PC-3 (cell line): ENCODE measurements at regions of chr16 and their contacts with region 1.

Region 1: DNA sequence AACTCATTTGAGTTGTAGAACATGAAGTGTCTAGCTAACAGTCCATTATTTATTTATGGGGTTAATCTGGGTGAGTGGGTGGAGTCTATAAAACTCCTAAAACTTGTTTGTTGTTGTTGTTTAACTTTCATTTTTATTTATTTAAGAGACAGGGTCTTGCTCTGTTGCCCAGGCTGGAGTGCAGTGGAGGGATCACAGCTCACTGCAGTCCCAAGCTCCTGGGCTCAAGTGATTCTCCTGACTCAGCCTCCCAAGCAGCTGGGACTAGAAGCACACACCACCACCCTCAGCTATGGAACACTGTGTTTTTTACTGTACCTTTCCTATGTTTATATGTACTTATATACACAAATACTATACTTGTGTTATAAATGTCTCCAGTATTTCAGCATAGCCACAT is 77.8 kb upstream of the CLEC18B start:
- DNase-seq: no peak
- ATAC-seq: no peak
- H3K4me3 ChIP-seq: no peak overlapping the region
- H3K27ac ChIP-seq: no peak overlapping the region
- H3K4me1 ChIP-seq: no peaks in the 10 kb centered on the region
- H3K27me3 ChIP-seq: no peaks in the 10 kb centered on the region
- CTCF ChIP-seq: no peak

Region 2: DNA sequence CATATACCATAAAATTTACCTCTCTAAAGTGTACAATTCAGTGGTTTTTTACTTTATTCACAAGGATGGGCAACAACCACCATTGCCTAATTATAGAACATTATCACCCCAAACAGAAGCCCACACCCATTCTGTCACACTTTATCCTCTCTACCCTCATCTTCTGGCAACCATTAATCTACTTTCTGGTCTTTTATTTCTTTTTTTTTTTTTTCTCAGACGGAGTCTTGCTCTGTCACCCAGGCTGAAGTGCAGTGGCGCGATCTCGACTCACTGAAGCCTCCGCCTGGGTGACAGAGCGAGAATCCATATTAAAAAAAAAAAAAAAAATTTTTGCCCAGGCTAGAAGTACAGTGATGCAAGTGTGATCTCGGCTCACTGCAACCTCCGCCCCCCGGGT is 12.8 kb after region 1 on chr16:
- CTCF ChIA-PET with region 1: no interaction called
- POLR2A ChIA-PET with region 1: no interaction called
- intact Hi-C with region 1: no loop called
- DNase-seq: no peak
- ATAC-seq: no peak
- H3K4me3 ChIP-seq: no peak overlapping the region
- H3K27ac ChIP-seq: no peak overlapping the region
- H3K4me1 ChIP-seq: no peaks in the 10 kb centered on the region
- H3K27me3 ChIP-seq: no peaks in the 10 kb centered on the region
- CTCF ChIP-seq: no peak

Region 3: GRCh38 chr16:74650966-74651567 is 152.0 kb after region 1 on chr16:
- CTCF ChIA-PET with region 1: no interaction called
- POLR2A ChIA-PET with region 1: interaction called, 17 read pairs
- intact Hi-C with region 1: no loop called
- DNase-seq: peak; percentile 17
- ATAC-seq: no peak
- H3K4me3 ChIP-seq: no peak overlapping the region
- H3K27ac ChIP-seq: no peak overlapping the region
- H3K4me1 ChIP-seq: peaks cover 6% of the 10 kb centered on the region; the same call in 1 of the 2 replicates
- H3K27me3 ChIP-seq: no peaks in the 10 kb centered on the region
- CTCF ChIP-seq: peak; percentile 55; the same call in 1 of the 2 replicates